ENCODE measurements at regions of chr22 and their contacts with region 1.

Region 1: GRCh38 chr22:46122511-46122971 is 27.8 kb upstream of the PPARA start:
- DNase-seq: peak; percentile 95
- H3K4me3 ChIP-seq: no peak overlapping the region; a peak in 2 of 4 replicates
- H3K27ac ChIP-seq: no peak overlapping the region
- H3K4me1 ChIP-seq: peaks cover 0 to 29% of the 10 kb centered on the region in 2 experiments; a peak in 1 of 4 replicates
- H3K27me3 ChIP-seq: no peaks in the 10 kb centered on the region
- CTCF ChIP-seq: peak; percentile 91
- EP300 ChIP-seq: no peak
- RAD21 ChIP-seq: peak; percentile 88

Region 2: DNA sequence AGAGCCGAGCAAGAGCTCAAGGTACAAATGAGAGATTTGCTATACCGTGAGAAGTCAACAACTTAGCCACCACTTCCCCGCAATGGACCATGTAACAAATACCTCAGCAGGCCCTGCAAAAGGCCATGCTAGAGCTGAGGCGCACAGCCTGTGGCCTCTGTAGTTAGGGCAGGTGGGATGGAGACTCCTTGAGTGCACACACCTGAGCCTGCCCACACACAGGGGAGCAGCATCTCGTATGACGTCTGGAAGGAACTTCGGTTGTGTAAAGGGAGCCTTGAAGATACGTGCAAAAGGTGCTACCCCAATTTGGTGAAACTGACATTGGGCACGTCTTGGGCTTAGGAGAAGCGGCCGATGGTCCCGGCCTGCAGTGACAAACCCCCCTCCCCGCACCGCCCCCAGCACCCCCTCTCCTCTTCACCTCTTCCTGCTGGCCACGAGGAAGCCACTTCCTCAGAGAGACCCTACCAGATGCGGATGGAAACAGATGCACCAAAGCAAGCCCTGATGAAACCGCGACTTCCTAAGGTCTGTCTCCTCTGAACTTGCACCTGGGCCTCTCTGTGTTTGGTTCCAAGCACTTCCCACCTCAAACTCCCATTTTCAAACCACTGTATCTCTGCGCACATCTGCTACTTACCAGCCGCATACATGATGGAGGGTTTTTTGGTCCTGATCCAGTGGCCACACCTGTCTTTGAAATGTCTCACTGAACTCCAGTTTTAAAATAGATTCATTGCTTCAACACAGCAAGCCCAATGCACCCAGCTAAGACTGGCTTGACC is 116.9 kb after region 1 on chr22:
- CTCF ChIA-PET with region 1: interaction called, 15 read pairs
- POLR2A ChIA-PET with region 1: no interaction called
- DNase-seq: no peak
- H3K4me3 ChIP-seq: no peak overlapping the region
- H3K27ac ChIP-seq: peak overlapping the region in 1 of 2 experiments; percentile 99; a peak in 2 of 4 replicates
- H3K4me1 ChIP-seq: peaks cover 0 to 63% of the 10 kb centered on the region in 2 experiments; a peak in 2 of 4 replicates
- H3K27me3 ChIP-seq: no peaks in the 10 kb centered on the region
- CTCF ChIP-seq: no peak
- EP300 ChIP-seq: no peak
- RAD21 ChIP-seq: no peak

Region 3: DNA sequence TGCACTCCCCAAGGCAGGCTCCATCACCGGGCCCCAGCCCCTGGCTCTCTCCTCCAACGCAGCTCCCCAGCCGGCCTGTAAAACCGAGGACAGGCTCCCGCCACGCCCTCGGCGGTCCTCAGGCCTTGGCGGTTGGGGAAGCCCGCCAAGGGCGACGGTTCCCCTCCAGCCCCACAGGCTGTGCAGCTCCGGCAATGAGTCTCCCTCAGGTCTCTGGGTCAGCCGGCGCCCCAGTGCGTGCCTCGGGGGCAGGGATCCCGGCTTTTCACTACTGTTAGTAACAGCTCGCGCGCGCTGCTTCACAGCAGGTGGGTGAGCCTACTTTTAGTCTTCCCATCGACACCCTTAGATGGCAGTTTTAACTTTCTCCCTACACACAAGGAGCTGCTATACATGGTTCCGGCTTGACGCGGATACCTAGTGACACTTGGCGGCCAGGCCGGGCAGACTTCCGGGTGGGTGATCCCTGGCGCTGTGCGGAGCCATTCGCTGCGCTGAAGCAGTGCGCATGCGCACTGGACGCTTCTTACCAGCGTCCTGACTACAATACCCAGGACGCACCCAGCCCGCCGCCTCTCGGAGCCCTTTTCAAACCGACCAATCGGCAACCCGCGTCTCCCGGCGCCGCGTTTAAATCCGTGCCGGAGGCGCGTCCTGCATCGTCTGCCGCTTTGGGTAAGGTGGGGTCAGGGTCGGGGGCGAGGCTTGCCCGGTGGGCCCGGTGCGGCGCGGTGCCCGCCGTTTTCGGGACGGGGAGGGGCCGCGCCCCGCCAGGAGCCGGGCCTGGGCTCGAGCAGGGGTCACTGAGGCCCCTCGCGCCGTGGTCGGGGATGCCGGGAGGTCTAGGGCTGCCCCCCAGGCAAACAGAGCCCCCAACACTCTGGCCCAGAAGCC is 174.0 kb after region 1 on chr22 and contains the start of gene GTSE1:
- CTCF ChIA-PET with region 1: interaction called, 45 read pairs
- POLR2A ChIA-PET with region 1: no interaction called
- DNase-seq: peak; percentile 99
- H3K4me3 ChIP-seq: peak within 1 kb of the TSS; percentile 75 to 82
- H3K27ac ChIP-seq: peak within 1 kb of the TSS; percentile 74 to 90
- H3K4me1 ChIP-seq: peaks cover 5 to 21% of the 10 kb centered on the region in 2 experiments; a peak in 3 of 4 replicates
- H3K27me3 ChIP-seq: no peaks in the 10 kb centered on the region
- CTCF ChIP-seq: peak; percentile 25; the same call in 1 of the 2 replicates
- EP300 ChIP-seq: no peak
- RAD21 ChIP-seq: peak; percentile 69
- polyA plus RNA-seq, gene GTSE1: 9.4 and 12.2 TPM in 2 replicates

Region 4: GRCh38 chr22:46309526-46310085 is 187.1 kb after region 1 on chr22:
- CTCF ChIA-PET with region 1: interaction called, 69 read pairs
- POLR2A ChIA-PET with region 1: no interaction called
- DNase-seq: no peak
- H3K4me3 ChIP-seq: no peak overlapping the region
- H3K27ac ChIP-seq: no peak overlapping the region
- H3K4me1 ChIP-seq: no peaks in the 10 kb centered on the region; a peak in 1 of 4 replicates
- H3K27me3 ChIP-seq: no peaks in the 10 kb centered on the region
- CTCF ChIP-seq: no peak
- EP300 ChIP-seq: no peak
- RAD21 ChIP-seq: no peak

Region 5: GRCh38 chr22:46328782-46329181 is 206.2 kb after region 1 on chr22:
- CTCF ChIA-PET with region 1: interaction called, 11 read pairs
- POLR2A ChIA-PET with region 1: no interaction called
- DNase-seq: no peak
- H3K4me3 ChIP-seq: no peak overlapping the region
- H3K27ac ChIP-seq: no peak overlapping the region
- H3K4me1 ChIP-seq: no peaks in the 10 kb centered on the region
- H3K27me3 ChIP-seq: no peaks in the 10 kb centered on the region
- CTCF ChIP-seq: no peak
- EP300 ChIP-seq: no peak
- RAD21 ChIP-seq: no peak